Colonic mucosa (tissue), 4 donors: ENCODE measurements at regions of chr17 and their contacts with region 1.

Region 1: GRCh38 chr17:42322382-42323267 is 34.3 kb downstream of the STAT5A start:
- DNase-seq: peak; percentile 95
- H3K4me3 ChIP-seq: no peak overlapping the region
- H3K27ac ChIP-seq: no peak overlapping the region
- H3K4me1 ChIP-seq: no peaks in the 10 kb centered on the region
- H3K27me3 ChIP-seq: no peaks in the 10 kb centered on the region
- CTCF ChIP-seq: peak; percentile 99

Region 2: DNA sequence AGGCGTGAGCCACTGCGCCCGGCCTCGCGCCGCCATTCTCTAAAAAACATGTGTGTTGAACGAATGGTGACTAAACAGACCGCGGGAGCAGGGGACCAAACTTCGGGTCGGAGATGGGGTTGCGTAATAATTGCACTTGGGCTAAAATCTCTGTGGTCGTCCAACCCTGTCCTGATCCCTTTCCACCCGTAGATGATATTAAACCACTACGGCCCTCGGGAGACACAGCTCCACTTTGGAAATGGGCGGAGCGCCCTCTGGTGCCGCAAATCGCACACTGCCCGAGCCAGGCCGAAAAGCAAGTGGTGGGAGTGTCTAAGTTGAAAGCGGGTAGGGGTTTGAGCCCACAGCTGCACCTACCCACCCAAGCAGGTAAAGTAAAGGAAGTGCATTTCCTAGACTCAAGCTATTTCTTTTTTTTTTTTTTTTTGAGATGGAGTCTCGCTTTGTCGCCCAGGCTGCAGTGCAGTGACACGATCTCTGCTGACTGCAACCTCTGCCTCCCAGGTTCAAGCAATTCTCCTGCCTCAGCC is 83.4 kb after region 1 on chr17:
- intact Hi-C with region 1: loop called (anchors 1 kb)
- DNase-seq: peak; percentile 88
- H3K4me3 ChIP-seq: no peak overlapping the region
- H3K27ac ChIP-seq: no peak overlapping the region
- H3K4me1 ChIP-seq: no peaks in the 10 kb centered on the region
- H3K27me3 ChIP-seq: no peaks in the 10 kb centered on the region
- CTCF ChIP-seq: peak; percentile 82

Region 3: DNA sequence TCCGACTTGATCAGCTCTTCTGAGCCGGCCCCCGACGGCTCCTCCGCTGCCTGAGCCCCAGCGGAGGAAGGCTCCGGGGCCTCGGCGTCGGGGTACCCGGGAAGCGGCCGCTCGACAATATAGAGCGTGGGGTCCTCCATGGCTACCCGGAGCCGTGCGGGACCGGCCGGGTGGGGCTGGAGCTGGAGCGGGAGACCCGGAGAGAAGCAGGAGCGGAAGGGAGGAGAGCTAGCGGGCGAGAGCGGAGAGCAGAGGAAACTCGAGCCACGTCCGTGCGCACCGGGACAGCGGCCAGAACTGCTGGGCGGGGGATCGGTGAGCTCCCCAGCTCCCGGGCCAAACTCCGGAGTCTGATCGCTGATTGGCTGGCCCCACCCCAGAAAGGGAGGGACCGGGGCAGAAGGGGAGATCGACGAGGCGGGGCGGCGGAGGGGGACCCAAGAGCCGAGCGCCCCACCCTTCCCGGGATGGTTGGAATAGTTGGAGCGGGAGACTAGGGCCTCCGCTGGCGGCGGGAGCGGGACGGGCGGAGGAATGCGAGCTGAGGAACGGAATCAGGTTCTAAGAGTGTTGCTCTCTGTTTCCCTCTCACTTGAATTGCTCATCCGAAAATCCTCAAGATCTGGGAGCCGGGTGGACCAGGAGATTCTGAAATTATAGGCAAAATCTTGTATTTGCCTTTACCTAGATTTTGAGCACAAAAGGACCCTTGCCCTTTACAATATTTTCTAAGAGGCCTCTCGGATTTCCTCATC is 100.5 kb after region 1 on chr17 and contains the start of gene CAVIN1:
- intact Hi-C with region 1: no loop called
- DNase-seq: peak; percentile 95
- H3K4me3 ChIP-seq: peak within 1 kb of the TSS; percentile 70
- H3K27ac ChIP-seq: peak within 1 kb of the TSS; percentile 82
- H3K4me1 ChIP-seq: peaks cover 9% of the 10 kb centered on the region
- H3K27me3 ChIP-seq: peaks cover 17% of the 10 kb centered on the region
- CTCF ChIP-seq: no peak
- total RNA-seq, gene CAVIN1: 25.2 to 74.6 TPM

Region 4: GRCh38 chr17:42517516-42517915 is 194.9 kb after region 1 on chr17:
- intact Hi-C with region 1: loop called (anchors 5 kb)
- DNase-seq: peak; percentile 95
- H3K4me3 ChIP-seq: no peak overlapping the region
- H3K27ac ChIP-seq: peak overlapping the region; percentile 95
- H3K4me1 ChIP-seq: peaks cover 39% of the 10 kb centered on the region
- H3K27me3 ChIP-seq: no peaks in the 10 kb centered on the region
- CTCF ChIP-seq: peak; percentile 99